ENCODE measurements at regions of chr9 and their contacts with region 1.

Region 1: DNA sequence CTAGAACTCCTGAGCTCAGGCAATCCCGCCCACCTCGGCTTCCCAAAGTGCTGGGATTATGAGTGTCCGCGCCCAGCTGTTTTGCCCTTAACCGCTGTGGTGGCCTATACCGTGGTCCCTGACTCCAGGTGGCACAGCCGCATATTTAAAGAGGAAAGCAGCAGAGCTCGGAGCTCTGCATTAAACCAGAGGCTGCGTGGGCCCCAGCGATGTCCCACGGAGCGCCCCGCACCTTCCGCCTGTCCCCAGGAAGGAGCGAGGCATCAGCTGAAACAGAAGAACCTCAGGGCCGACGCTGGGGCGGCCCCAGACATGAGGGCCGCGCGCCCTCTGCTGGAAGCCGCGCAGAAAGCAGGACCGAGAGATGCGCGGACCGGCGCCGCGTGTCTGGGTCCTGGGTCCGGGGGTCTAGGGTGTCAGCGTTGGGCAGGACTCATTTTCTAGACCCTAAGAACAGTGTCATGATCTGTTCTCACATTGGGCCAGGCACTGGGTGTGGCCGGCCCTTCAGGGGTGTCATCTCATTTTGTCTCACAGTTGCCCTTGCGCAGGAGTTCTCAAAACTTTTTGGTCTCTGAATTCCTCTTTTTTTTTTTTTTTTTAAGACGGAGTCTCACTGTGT is 37.7 kb downstream of the LAMC3 start:
- DNase-seq: peak; percentile 37
- ATAC-seq: peak; percentile 89
- H3K4me3 ChIP-seq: peak overlapping the region; percentile 26 to 45
- H3K27ac ChIP-seq: 0 out of 2 replicates have a peak overlapping the region, but pooled peaks have one; percentile 27
- H3K4me1 ChIP-seq: peaks cover 12 to 22% of the 10 kb centered on the region in 2 experiments; a peak in 3 of 4 replicates
- H3K27me3 ChIP-seq: no peaks in the 10 kb centered on the region
- CTCF ChIP-seq: peak; percentile 91 to 93 (median 92)
- POLR2A ChIP-seq: no peak
- RAD21 ChIP-seq: peak; percentile 97

Region 2: GRCh38 chr9:130707225-130707976 is 339.3 kb before region 1 on chr9:
- CTCF ChIA-PET with region 1: interaction called, 3 read pairs
- POLR2A ChIA-PET with region 1: no interaction called
- RAD21 ChIA-PET with region 1: interaction called in 1 of 2 experiments, 4 read pairs
- intact Hi-C with region 1: loop called (anchors 5 kb)
- DNase-seq: no peak
- ATAC-seq: peak; percentile 72
- H3K4me3 ChIP-seq: no peak overlapping the region
- H3K27ac ChIP-seq: no peak overlapping the region
- H3K4me1 ChIP-seq: peaks cover 0 to 12% of the 10 kb centered on the region in 2 experiments; a peak in 1 of 4 replicates
- H3K27me3 ChIP-seq: no peaks in the 10 kb centered on the region
- CTCF ChIP-seq: peak; percentile 60 to 87 (median 83)
- POLR2A ChIP-seq: no peak
- RAD21 ChIP-seq: peak; percentile 84

Region 3: DNA sequence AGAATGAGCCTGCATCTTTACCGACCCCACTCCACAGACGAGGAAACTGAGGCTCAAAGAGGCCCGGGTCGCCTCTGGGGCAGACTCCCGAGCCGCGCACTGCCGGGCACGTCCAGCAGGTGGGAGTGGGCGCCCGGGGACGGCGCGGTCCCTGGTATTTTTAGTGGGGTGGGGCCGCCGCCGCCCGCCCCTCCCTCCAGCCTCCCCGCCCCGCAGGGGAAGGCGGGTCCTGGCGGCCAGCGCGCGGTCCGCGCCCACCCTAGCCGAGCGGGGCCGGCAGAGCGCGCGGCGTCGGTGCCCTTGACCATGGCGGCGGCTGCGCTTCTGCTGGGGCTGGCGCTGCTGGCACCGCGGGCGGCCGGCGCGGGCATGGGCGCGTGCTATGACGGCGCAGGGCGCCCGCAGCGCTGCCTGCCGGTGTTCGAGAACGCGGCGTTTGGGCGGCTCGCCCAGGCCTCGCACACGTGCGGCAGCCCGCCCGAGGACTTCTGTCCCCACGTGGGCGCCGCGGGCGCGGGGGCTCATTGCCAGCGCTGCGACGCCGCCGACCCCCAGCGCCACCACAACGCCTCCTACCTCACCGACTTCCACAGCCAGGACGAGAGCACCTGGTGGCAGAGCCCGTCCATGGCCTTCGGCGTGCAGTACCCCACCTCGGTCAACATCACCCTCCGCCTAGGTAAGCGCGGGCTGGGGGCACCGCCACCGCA is 37.6 kb before region 1 on chr9 and contains the start of gene LAMC3:
- CTCF ChIA-PET with region 1: interaction called, 5 read pairs
- POLR2A ChIA-PET with region 1: no interaction called
- RAD21 ChIA-PET with region 1: interaction called, 3 to 4 read pairs
- intact Hi-C with region 1: loop called (anchors 5 kb)
- DNase-seq: no peak
- ATAC-seq: peak; percentile 89
- H3K4me3 ChIP-seq: peak within 1 kb of the TSS; percentile 50 to 59
- H3K27ac ChIP-seq: no peak within 1 kb of the TSS; the same call in 1 of the 2 replicates
- H3K4me1 ChIP-seq: peaks cover 3 to 14% of the 10 kb centered on the region in 2 experiments
- H3K27me3 ChIP-seq: no peaks in the 10 kb centered on the region
- CTCF ChIP-seq: peak; percentile 30 to 61 (median 50); a peak in 5 of 6 replicates
- POLR2A ChIP-seq: no peak
- RAD21 ChIP-seq: peak; percentile 62
- total RNA-seq, gene LAMC3: 7.7 TPM

Region 4: GRCh38 chr9:131018621-131019020 is 28.1 kb before region 1 on chr9:
- CTCF ChIA-PET with region 1: interaction called, 10 read pairs
- POLR2A ChIA-PET with region 1: no interaction called
- RAD21 ChIA-PET with region 1: no interaction called
- intact Hi-C with region 1: no loop called
- DNase-seq: no peak
- ATAC-seq: peak; percentile 93
- H3K4me3 ChIP-seq: no peak overlapping the region
- H3K27ac ChIP-seq: no peak overlapping the region
- H3K4me1 ChIP-seq: no peaks in the 10 kb centered on the region
- H3K27me3 ChIP-seq: no peaks in the 10 kb centered on the region
- CTCF ChIP-seq: peak; percentile 18 to 55 (median 52); a peak in 4 of 6 replicates
- POLR2A ChIP-seq: no peak
- RAD21 ChIP-seq: no peak